ENCODE measurements at regions of chr4 and their contacts with region 1.

Region 1: DNA sequence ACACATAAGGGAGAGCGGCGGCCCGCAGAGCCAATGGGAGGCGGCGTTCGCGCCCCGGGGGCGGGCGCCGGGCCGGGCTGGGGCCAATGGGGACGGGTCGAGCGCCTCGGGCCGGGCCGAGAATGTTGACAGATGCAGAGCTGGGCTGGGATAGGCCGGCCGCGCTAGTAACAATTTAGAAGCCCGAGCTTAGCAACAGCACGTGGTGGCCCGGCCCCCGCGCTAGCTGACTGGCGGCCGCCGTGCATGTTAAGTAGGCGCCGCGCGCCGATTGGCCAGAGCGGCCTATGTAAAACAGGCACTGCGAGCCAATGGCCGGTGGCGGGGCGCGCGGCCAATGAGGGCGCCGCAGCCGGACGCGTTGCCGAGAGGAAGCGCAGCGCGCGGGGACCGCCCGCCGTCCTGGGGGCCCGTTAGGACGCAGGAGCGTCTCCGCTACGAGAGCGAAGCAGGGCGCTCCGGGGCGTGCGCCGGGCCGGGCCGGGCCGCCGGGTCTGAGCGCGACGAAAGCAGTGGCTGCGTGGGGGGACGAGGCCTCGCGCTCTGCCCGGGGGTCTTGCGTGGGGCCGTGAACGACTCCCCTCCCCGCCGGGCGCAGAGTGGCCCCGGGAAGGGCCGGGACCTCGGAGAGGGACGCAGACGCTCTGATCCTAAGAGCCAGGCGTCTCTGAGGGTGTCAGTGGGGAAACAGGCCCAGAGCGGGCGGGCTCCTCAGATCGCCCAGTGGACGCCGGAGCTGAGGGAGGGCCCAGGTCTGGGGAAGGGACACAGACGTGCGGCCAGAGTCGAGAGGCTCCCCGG is 434 bp upstream of the MXD4 start:
- DNase-seq: peak; percentile 99
- ATAC-seq: peak; percentile 89
- H3K4me3 ChIP-seq: peak overlapping the region; percentile 97
- H3K27ac ChIP-seq: peak overlapping the region; percentile 75
- H3K4me1 ChIP-seq: peaks cover 8% of the 10 kb centered on the region; the same call in 1 of the 2 replicates
- H3K27me3 ChIP-seq: no peaks in the 10 kb centered on the region
- CTCF ChIP-seq: no peak
- POLR2A ChIP-seq: peak; percentile 77
- RAD21 ChIP-seq: no peak

Region 2: DNA sequence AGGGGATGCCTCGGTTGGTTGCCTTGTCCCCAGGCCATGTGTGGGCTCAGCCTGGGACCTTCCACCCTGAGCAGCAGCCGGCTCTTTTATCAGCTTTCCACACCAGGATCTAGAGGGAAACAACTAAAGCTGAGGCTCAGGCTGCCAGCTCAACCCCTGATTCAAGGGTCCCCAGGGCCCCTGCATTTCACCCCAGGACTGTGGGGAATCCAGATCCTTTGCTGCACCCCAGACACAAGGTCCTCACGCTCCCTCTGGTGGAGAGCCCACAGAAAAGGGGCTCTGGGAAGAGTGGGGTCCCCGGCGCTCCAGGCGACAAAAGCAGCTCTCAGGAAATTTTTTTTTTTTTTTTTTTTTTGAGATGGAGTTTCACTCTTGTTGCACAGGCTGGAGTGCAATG is 91.8 kb after region 1 on chr4:
- CTCF ChIA-PET with region 1: no interaction called
- POLR2A ChIA-PET with region 1: no interaction called
- dilution Hi-C with region 1: no loop called
- in situ Hi-C with region 1: no loop called
- intact Hi-C with region 1: loop called (anchors 5 kb)
- DNase-seq: no peak
- ATAC-seq: peak; percentile 57; the same call in 1 of the 2 replicates
- H3K4me3 ChIP-seq: no peak overlapping the region
- H3K27ac ChIP-seq: no peak overlapping the region
- H3K4me1 ChIP-seq: no peaks in the 10 kb centered on the region
- H3K27me3 ChIP-seq: peaks cover 3% of the 10 kb centered on the region
- CTCF ChIP-seq: peak; percentile 44
- POLR2A ChIP-seq: no peak
- RAD21 ChIP-seq: peak; percentile 46

Region 3: GRCh38 chr4:2418650-2419571 is 156.6 kb after region 1 on chr4 and contains the start of gene CFAP99:
- CTCF ChIA-PET with region 1: no interaction called
- POLR2A ChIA-PET with region 1: no interaction called
- dilution Hi-C with region 1: no loop called
- in situ Hi-C with region 1: no loop called
- intact Hi-C with region 1: loop called (anchors 10 kb)
- DNase-seq: peak; percentile 88
- ATAC-seq: peak; percentile 98
- H3K4me3 ChIP-seq: peak within 1 kb of the TSS; percentile 66
- H3K27ac ChIP-seq: no peak within 1 kb of the TSS
- H3K4me1 ChIP-seq: peaks cover 4% of the 10 kb centered on the region; the same call in 1 of the 2 replicates
- H3K27me3 ChIP-seq: peaks cover 70% of the 10 kb centered on the region
- CTCF ChIP-seq: peak; percentile 32
- POLR2A ChIP-seq: no peak
- RAD21 ChIP-seq: no peak
- total RNA-seq, gene CFAP99: not detected in 2 replicates

Region 4: GRCh38 chr4:2468445-2469192 is 206.3 kb after region 1 on chr4 and contains the start of gene RNF4:
- CTCF ChIA-PET with region 1: no interaction called
- POLR2A ChIA-PET with region 1: no interaction called
- dilution Hi-C with region 1: no loop called
- in situ Hi-C with region 1: no loop called
- intact Hi-C with region 1: loop called (anchors 5 kb)
- DNase-seq: peak; percentile 95
- ATAC-seq: peak; percentile 93
- H3K4me3 ChIP-seq: peak within 1 kb of the TSS; percentile 83
- H3K27ac ChIP-seq: peak within 1 kb of the TSS; percentile 80
- H3K4me1 ChIP-seq: no peaks in the 10 kb centered on the region
- H3K27me3 ChIP-seq: no peaks in the 10 kb centered on the region
- CTCF ChIP-seq: no peak
- POLR2A ChIP-seq: peak; percentile 86
- RAD21 ChIP-seq: no peak
- total RNA-seq, gene RNF4: 63.8 and 64.4 TPM in 2 replicates

Region 5: DNA sequence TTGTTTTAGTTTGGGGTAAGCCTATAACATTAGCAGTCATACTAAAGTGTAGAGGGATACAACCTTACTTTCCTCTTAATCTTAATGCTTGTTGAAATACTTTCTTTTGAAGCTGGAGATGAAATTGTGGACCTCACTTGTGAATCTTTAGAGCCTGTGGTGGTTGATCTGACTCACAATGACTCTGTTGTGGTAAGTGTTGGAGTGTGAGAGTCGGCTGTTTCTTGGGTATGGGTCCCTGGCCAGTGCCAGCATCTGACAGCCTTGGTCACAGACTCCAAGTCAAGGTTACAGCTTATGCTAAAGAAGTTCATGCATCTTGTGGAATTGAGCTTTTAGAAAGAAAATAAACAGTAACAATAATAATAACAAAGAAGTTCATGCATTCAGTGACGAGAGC is 238.2 kb after region 1 on chr4:
- CTCF ChIA-PET with region 1: no interaction called
- POLR2A ChIA-PET with region 1: no interaction called
- dilution Hi-C with region 1: no loop called
- in situ Hi-C with region 1: no loop called
- intact Hi-C with region 1: no loop called
- DNase-seq: peak; percentile 33
- ATAC-seq: no peak; the same call in 1 of the 2 replicates
- H3K4me3 ChIP-seq: no peak overlapping the region
- H3K27ac ChIP-seq: no peak overlapping the region
- H3K4me1 ChIP-seq: no peaks in the 10 kb centered on the region
- H3K27me3 ChIP-seq: no peaks in the 10 kb centered on the region
- CTCF ChIP-seq: no peak
- POLR2A ChIP-seq: no peak
- RAD21 ChIP-seq: no peak

Region 6: GRCh38 chr4:2617955-2618354 is 355.6 kb after region 1 on chr4:
- CTCF ChIA-PET with region 1: no interaction called
- POLR2A ChIA-PET with region 1: no interaction called
- dilution Hi-C with region 1: no loop called
- in situ Hi-C with region 1: no loop called
- intact Hi-C with region 1: no loop called
- DNase-seq: peak; percentile 45
- ATAC-seq: no peak
- H3K4me3 ChIP-seq: no peak overlapping the region
- H3K27ac ChIP-seq: no peak overlapping the region
- H3K4me1 ChIP-seq: peaks cover 4% of the 10 kb centered on the region
- H3K27me3 ChIP-seq: no peaks in the 10 kb centered on the region
- CTCF ChIP-seq: no peak
- POLR2A ChIP-seq: no peak
- RAD21 ChIP-seq: no peak

Region 7: DNA sequence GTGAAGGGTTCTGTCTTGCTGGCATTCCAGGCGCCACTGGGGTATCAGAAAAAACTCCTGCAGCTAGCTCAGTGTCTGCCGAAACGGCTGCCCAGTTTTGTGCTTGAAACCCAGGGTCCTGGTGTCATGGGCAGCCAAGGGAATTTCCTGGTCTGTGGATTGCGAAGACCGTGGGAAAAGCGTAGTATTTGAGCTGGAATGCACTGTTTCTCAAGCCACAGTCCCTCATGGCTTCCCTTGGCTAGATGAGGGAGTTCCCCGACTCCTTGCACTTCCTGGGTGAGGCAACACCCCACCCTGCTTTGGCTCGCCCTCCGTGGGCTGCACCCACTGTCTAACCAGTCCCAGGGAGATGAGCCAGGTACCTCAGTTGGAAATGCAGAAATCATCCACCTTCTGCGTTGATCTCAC is 660.8 kb after region 1 on chr4:
- CTCF ChIA-PET with region 1: no interaction called
- POLR2A ChIA-PET with region 1: no interaction called
- dilution Hi-C with region 1: no loop called
- in situ Hi-C with region 1: no loop called
- intact Hi-C with region 1: no loop called
- DNase-seq: peak; percentile 55
- ATAC-seq: peak; percentile 16
- H3K4me3 ChIP-seq: no peak overlapping the region
- H3K27ac ChIP-seq: peak overlapping the region; percentile 32; the same call in 1 of the 2 replicates
- H3K4me1 ChIP-seq: peaks cover 4% of the 10 kb centered on the region; the same call in 1 of the 2 replicates
- H3K27me3 ChIP-seq: no peaks in the 10 kb centered on the region
- CTCF ChIP-seq: no peak
- POLR2A ChIP-seq: no peak
- RAD21 ChIP-seq: no peak

Measured in IMR-90 (cell line).